Naive thymus-derived CD4-positive, alpha-beta T cell (primary cell): ENCODE measurements at regions of chr21 and their contacts with region 1.

Region 1: DNA sequence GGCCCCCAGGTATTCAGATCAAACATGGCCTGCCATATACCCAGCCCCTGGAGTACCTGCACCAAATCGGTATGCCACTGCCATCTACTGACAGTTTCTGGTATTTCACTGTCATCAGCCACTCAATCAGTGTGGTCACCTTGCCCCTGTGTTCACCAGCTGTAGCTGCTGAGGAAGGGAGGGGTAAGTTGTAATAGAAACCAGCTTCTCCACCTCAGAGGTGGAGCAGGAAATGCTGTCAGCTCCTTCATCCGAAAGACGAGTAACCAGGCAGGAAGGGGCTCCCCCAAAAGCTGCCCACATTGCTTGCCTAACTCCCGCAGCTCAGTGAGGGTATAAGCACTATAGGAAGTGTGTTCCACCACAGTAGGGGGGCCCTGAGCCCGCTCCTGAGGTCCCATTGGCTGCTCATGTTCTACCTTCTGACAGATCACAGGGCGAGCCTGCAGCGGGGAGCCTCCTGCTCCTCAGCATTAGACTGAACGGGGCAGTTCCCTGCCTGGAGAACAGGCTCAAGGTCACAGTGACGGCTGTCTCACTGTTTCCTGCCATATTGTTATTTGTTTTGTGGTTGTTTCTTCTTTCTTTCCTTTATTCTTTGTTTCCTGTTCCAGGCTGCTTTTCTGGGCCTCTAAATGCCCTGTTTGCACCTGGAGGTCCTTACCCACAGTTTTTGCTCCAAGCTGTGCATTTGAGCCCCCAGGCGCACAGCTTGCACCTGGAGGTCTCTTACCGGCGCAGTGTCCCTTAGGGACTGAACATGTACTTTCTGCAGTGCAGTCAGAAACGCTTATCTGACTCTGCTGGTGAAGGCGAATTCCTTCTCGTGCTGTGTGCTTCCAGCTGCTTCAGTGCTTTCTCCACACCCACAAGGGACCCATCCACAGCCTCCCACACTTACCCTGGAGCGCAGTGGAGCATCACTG is 1638.3 kb downstream of the MRPL39 start:
- DNase-seq: peak; percentile 26 to 84 (median 80)
- ATAC-seq: peak; percentile 92
- H3K4me3 ChIP-seq: peak overlapping the region; percentile 13
- H3K4me3 Mint-ChIP-seq: peak overlapping the region; percentile 57 to 82 (median 76)
- H3K27ac ChIP-seq: peak overlapping the region; percentile 49
- H3K27ac Mint-ChIP-seq: peak overlapping the region; percentile 69 to 94 (median 88)
- H3K4me1 ChIP-seq: peaks cover 10 to 17% of the 10 kb centered on the region in 2 donors
- H3K4me1 Mint-ChIP-seq: peaks cover 0 to 41% (median 24%) of the 10 kb centered on the region in 7 donors
- H3K27me3 ChIP-seq: no peaks in the 10 kb centered on the region
- H3K27me3 Mint-ChIP-seq: peaks cover 0 to 23% (median 0%) of the 10 kb centered on the region in 5 donors

Region 2: DNA sequence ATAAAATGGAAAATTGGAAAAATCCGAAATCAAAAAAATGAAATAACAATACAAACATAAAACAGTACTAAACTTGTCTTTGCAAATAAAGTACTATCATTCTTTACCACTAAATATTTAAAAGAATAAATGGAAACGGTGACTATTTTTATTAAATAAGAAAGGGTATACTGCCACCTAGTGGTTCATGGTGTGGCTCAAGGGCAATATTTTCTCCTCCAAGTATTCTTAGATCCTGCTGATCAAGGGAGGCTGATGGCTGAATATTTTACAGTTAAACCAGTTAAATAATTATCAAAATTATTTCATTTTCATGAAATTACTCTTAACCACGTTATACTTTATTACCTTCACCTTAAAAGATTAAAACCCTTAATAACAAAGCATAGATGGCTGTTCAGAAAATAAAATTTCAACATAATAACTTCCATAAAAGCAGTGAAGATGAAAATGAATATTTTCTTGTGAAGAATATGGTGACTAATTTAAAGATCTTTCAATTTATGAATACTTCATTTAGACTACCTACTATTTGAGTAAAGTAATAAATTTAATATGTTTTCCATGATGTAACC is 1176.9 kb before region 1 on chr21:
- CTCF ChIA-PET with region 1: no interaction called
- POLR2A ChIA-PET with region 1: no interaction called
- intact Hi-C with region 1: loop called (anchors 1 kb)
- DNase-seq: peak in 7 of 9 donors; percentile 12 to 54 (median 19)
- ATAC-seq: peak; percentile 38
- H3K4me3 ChIP-seq: no peak overlapping the region
- H3K4me3 Mint-ChIP-seq: no peak overlapping the region
- H3K27ac ChIP-seq: no peak overlapping the region
- H3K27ac Mint-ChIP-seq: no peak overlapping the region
- H3K4me1 ChIP-seq: no peaks in the 10 kb centered on the region
- H3K4me1 Mint-ChIP-seq: peaks cover 0 to 2% (median 0%) of the 10 kb centered on the region in 7 donors
- H3K27me3 ChIP-seq: no peaks in the 10 kb centered on the region
- H3K27me3 Mint-ChIP-seq: no peaks in the 10 kb centered on the region

Region 3: GRCh38 chr21:23853796-23854379 is 115.1 kb before region 1 on chr21:
- CTCF ChIA-PET with region 1: interaction called, 3 read pairs
- POLR2A ChIA-PET with region 1: no interaction called
- intact Hi-C with region 1: loop called (anchors 1 kb)
- DNase-seq: peak in 6 of 9 donors; percentile 18 to 56 (median 34)
- ATAC-seq: peak; percentile 75
- H3K4me3 ChIP-seq: no peak overlapping the region
- H3K4me3 Mint-ChIP-seq: no peak overlapping the region
- H3K27ac ChIP-seq: no peak overlapping the region
- H3K27ac Mint-ChIP-seq: peak overlapping the region in 1 of 9 donors; percentile 6
- H3K4me1 ChIP-seq: no peaks in the 10 kb centered on the region
- H3K4me1 Mint-ChIP-seq: peaks cover 4 to 11% (median 6%) of the 10 kb centered on the region in 7 donors
- H3K27me3 ChIP-seq: no peaks in the 10 kb centered on the region
- H3K27me3 Mint-ChIP-seq: peaks cover 0 to 8% (median 0%) of the 10 kb centered on the region in 5 donors

Region 4: GRCh38 chr21:23921670-23922418 is 47.1 kb before region 1 on chr21:
- CTCF ChIA-PET with region 1: no interaction called
- POLR2A ChIA-PET with region 1: no interaction called
- intact Hi-C with region 1: loop called in 1 of 2 experiments (anchors 5 kb)
- DNase-seq: no peak
- ATAC-seq: peak; percentile 31
- H3K4me3 ChIP-seq: no peak overlapping the region
- H3K4me3 Mint-ChIP-seq: peak overlapping the region in 5 of 10 donors; percentile 30 to 54 (median 47)
- H3K27ac ChIP-seq: no peak overlapping the region
- H3K27ac Mint-ChIP-seq: no peak overlapping the region
- H3K4me1 ChIP-seq: peaks cover 0 to 9% of the 10 kb centered on the region in 2 donors
- H3K4me1 Mint-ChIP-seq: peaks cover 0 to 20% (median 15%) of the 10 kb centered on the region in 7 donors
- H3K27me3 ChIP-seq: no peaks in the 10 kb centered on the region
- H3K27me3 Mint-ChIP-seq: peaks cover 0 to 9% (median 0%) of the 10 kb centered on the region in 5 donors

Region 5: GRCh38 chr21:23936224-23936623 is 32.8 kb before region 1 on chr21:
- CTCF ChIA-PET with region 1: no interaction called
- POLR2A ChIA-PET with region 1: no interaction called
- intact Hi-C with region 1: loop called (anchors 1 to 2 kb)
- DNase-seq: no peak
- ATAC-seq: no peak
- H3K4me3 ChIP-seq: no peak overlapping the region
- H3K4me3 Mint-ChIP-seq: no peak overlapping the region
- H3K27ac ChIP-seq: no peak overlapping the region
- H3K27ac Mint-ChIP-seq: no peak overlapping the region
- H3K4me1 ChIP-seq: no peaks in the 10 kb centered on the region
- H3K4me1 Mint-ChIP-seq: peaks cover 0 to 2% (median 0%) of the 10 kb centered on the region in 7 donors
- H3K27me3 ChIP-seq: no peaks in the 10 kb centered on the region
- H3K27me3 Mint-ChIP-seq: peaks cover 0 to 13% (median 0%) of the 10 kb centered on the region in 5 donors

Region 6: GRCh38 chr21:24045775-24046215 is 76.8 kb after region 1 on chr21:
- CTCF ChIA-PET with region 1: interaction called, 3 read pairs
- POLR2A ChIA-PET with region 1: no interaction called
- intact Hi-C with region 1: loop called in 1 of 2 experiments (anchors 2 kb)
- DNase-seq: peak in 1 of 9 donors; percentile 4
- ATAC-seq: no peak
- H3K4me3 ChIP-seq: no peak overlapping the region
- H3K4me3 Mint-ChIP-seq: peak overlapping the region in 7 of 10 donors; percentile 26 to 53 (median 41)
- H3K27ac ChIP-seq: no peak overlapping the region
- H3K27ac Mint-ChIP-seq: peak overlapping the region in 3 of 9 donors; percentile 70 to 81 (median 74)
- H3K4me1 ChIP-seq: peaks cover 0 to 11% of the 10 kb centered on the region in 2 donors
- H3K4me1 Mint-ChIP-seq: peaks cover 0 to 36% (median 19%) of the 10 kb centered on the region in 7 donors
- H3K27me3 ChIP-seq: no peaks in the 10 kb centered on the region
- H3K27me3 Mint-ChIP-seq: no peaks in the 10 kb centered on the region